ENCODE measurements at regions of chr19 and their contacts with region 1.

Region 1: DNA sequence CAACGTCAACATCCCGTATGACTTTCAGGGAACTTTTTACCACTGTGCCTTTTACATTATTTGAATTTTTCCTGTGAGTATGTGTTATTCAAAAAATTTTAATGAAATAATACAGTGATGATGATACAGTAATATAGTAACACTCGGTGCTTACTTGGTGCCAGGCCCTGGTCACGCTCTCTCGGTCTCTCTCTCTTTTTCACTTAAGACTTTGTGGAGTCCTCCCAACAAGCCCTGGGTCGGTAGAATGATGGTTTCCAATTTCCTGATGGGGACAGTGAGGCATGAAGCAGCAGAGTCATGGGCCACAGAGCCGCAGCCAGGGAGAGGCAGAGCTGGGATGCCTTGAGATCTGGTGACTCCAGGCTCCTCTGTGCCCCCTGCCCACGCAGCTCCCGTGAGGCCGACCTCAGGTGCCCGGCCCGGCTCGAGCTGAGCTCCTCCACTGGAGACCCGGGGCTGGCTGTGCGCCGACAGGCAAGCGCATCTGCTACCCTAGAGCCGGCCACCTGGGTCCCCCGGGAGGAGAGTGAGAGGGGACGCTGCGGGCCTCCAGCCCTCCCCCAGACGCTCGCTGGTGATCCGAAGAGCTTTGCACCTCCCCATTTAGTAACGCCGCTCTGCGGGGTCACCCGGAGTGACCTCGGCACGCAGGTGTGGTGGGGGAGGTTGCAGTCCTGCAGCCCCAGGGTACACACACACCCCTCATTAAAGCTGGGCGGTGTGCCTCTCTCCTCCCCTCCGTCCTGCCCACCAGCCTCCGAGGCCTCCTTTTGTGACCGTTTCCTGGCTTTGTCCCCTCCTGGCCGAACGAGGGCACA is 4.4 kb upstream of the SBK3 start:
- DNase-seq: no peak
- ATAC-seq: no peak

Region 2: GRCh38 chr19:55563261-55563690 is 13.6 kb after region 1 on chr19:
- intact Hi-C with region 1: loop called (anchors 1 kb)
- DNase-seq: peak; percentile 79
- ATAC-seq: peak; percentile 90

Region 3: DNA sequence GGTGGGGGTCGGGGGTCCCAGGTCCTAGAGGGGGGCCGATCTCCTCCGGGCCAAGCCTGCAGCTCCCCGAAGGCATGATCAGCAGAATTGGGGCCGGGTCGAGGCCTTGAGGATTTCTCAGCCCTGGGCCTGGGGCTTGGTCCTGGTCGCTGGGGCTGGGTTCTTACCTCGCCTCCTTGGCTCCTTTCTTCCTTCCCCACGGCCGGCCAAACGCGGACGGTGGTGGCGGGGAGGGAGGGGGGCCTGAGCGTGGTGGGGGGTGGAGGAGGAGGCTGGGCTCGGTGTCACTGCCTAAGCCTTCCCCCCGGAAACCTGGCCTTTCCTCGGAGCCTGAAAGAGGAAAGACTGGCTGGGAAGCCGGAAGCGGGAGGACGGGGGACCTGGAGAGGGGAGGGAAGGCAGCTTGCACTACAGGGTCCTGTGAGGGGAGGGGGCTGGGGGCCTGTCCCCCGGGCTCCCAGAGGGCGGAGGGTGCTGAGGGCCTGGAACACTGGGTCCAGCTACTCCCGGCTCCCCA is 31.0 kb after region 1 on chr19 and contains the start of gene ZNF579:
- intact Hi-C with region 1: loop called (anchors 5 kb)
- DNase-seq: peak; percentile 85
- ATAC-seq: peak; percentile 84
- total RNA-seq, gene ZNF579: 13.1 TPM

Measured in Right ventricle myocardium inferior (tissue), 1 donor.